Left lung (tissue), 14 donors: ENCODE measurements at regions of chr21 and their contacts with region 1.

Region 1: DNA sequence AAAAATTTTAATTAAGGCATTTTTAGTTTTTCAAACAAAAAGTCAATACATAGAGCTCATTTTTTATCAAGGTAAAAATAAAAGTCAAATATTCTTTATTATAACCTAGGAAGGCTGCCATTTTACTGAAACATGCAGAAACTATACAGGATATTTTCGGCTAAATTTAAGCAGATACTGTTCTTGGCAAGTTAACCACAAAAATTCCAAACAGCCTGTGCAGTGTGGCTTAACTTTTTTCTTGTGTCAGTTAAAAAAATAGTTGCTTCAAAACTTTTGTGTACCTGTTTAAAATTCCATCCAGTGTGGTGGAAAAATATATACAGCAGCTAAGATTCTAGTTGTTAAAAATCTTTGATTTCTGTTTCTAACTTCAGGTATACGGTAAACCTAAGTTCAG is 135.0 kb downstream of the ATP5PO start:
- DNase-seq: no peak
- ATAC-seq: no peak
- H3K4me3 ChIP-seq: no peak overlapping the region
- H3K27ac ChIP-seq: no peak overlapping the region
- H3K4me1 ChIP-seq: no peaks in the 10 kb centered on the region
- H3K27me3 ChIP-seq: no peaks in the 10 kb centered on the region
- CTCF ChIP-seq: no peak

Region 2: DNA sequence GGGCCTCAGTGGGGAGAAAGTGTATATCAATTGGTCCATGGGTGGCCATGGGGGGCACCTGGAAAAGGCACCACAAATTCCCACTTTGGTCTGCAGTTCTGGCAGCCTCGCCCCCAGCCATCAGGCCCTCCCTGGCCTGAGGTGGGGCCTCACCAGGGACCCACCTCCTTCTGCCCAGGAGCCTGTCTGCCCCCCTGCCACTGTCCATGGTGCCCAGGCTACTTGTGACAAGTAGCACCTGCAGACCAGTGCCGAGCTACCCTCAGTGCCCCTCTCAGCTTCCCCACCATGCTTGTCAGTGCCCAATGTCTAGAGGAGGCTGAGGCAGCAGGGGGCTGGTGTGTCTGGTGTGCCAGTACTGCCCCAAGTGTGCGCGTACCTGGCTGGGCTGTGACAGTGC is 922.0 kb before region 1 on chr21:
- intact Hi-C with region 1: no loop called
- DNase-seq: no peak
- ATAC-seq: no peak
- H3K4me3 ChIP-seq: no peak overlapping the region
- H3K27ac ChIP-seq: no peak overlapping the region
- H3K4me1 ChIP-seq: peaks cover 0 to 10% of the 10 kb centered on the region in 2 donors
- H3K27me3 ChIP-seq: no peaks in the 10 kb centered on the region
- CTCF ChIP-seq: no peak

Region 3: GRCh38 chr21:33308586-33309490 is 471.8 kb before region 1 on chr21:
- intact Hi-C with region 1: no loop called
- DNase-seq: peak in 2 of 4 donors; percentile 32 to 37
- ATAC-seq: no peak
- H3K4me3 ChIP-seq: no peak overlapping the region
- H3K27ac ChIP-seq: no peak overlapping the region
- H3K4me1 ChIP-seq: peaks cover 0 to 18% of the 10 kb centered on the region in 2 donors
- H3K27me3 ChIP-seq: no peaks in the 10 kb centered on the region
- CTCF ChIP-seq: no peak

Region 4: GRCh38 chr21:33703750-33704606 is 76.7 kb before region 1 on chr21:
- intact Hi-C with region 1: loop called in 1 of 2 experiments (anchors 5 kb)
- DNase-seq: peak in 1 of 4 donors; percentile 15
- ATAC-seq: peak; percentile 95
- H3K4me3 ChIP-seq: no peak overlapping the region
- H3K27ac ChIP-seq: peak overlapping the region; percentile 16 to 26
- H3K4me1 ChIP-seq: no peaks in the 10 kb centered on the region
- H3K27me3 ChIP-seq: no peaks in the 10 kb centered on the region
- CTCF ChIP-seq: no peak